AG04449 (cell line): ENCODE measurements at regions of chr6 and their contacts with region 1.

Region 1: DNA sequence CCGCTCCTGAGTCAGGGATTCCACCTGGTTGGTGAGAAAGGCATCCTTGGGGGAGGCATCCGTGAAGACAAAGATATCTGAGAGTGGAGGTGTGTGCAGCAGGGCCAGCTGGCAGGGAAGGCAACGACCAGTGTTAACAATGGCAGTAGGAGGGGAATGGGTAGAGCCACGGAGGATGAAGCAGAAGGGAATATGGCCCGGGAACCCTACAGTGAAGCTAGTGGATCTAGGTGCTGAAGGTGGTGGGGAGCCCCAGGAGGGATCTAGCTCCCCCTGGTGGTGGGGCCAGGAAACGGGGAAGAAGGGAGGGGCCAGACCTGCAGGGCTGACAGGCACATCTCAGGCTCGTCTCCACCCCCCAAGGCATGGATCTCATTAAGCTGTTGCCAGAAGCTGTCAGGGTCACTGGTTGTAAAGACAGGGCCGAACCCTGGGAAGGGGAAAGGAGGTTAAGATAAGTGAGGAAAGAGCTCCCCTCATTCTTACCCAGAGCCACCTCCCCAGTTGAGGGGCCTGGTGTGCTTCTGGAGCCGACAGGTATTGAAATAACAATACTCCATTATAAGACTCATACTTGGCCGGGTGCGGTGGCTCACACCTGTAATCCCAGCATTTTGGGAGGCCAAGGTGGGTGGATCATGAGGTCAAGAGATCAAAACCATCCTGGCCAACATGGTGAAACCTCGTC is 7.3 kb downstream of the VWA7 start:
- DNase-seq: no peak
- H3K4me3 ChIP-seq: no peak overlapping the region
- CTCF ChIP-seq: peak; percentile 78

Region 2: DNA sequence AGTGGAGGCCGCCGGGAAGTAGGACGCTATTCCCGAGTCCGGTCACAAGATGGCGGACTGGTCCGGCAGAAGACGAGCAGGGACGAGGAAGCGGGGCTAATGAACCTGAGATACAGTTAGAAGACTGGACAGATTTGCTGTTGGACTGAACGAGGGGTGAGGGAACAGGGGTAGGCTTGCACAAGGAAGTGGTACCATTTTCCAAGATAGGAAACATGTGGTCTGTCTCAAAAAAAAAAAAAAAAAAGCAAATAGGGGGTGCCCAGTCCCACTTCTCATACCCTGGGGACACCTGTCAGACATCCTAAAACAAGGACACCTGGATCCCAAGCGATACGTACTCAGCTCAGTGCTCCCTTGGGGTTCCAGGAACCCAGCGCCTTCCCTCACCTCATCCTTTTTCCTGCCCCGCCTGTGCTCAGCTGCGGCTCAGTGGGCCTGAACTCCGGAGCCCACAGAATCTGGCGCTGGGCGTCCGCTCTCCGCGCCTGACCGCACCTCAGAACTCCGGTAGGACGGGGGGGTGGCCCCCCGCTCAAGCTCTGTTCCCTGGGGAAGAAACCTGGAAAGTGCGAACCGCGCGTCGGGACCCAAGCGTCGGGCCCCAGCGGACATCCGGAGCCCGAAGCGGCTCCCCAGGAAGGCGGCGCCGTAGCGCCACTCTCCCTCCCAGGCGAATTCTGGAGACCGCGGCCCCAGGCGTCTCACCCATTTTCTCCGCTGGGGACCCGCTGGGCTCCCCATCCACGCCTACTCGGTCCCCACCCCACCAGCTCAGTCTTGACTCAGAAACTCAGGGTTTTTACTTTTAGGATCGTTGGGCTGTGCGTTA is 88.8 kb before region 1 on chr6 and contains the start of gene LY6G5C:
- CTCF ChIA-PET with region 1: interaction called, 12 read pairs
- POLR2A ChIA-PET with region 1: no interaction called
- DNase-seq: peak; percentile 64
- H3K4me3 ChIP-seq: peak within 1 kb of the TSS; percentile 58
- CTCF ChIP-seq: peak; percentile 78

Region 3: GRCh38 chr6:31702819-31703522 is 66.9 kb before region 1 on chr6 and contains the start of gene ABHD16A:
- CTCF ChIA-PET with region 1: interaction called, 11 read pairs
- POLR2A ChIA-PET with region 1: no interaction called
- DNase-seq: peak; percentile 84
- H3K4me3 ChIP-seq: peak within 1 kb of the TSS; percentile 84
- CTCF ChIP-seq: no peak

Region 4: GRCh38 chr6:31752739-31753319 is 17.0 kb before region 1 on chr6:
- CTCF ChIA-PET with region 1: interaction called, 28 read pairs
- POLR2A ChIA-PET with region 1: no interaction called
- DNase-seq: no peak
- H3K4me3 ChIP-seq: no peak overlapping the region
- CTCF ChIP-seq: no peak

Region 5: DNA sequence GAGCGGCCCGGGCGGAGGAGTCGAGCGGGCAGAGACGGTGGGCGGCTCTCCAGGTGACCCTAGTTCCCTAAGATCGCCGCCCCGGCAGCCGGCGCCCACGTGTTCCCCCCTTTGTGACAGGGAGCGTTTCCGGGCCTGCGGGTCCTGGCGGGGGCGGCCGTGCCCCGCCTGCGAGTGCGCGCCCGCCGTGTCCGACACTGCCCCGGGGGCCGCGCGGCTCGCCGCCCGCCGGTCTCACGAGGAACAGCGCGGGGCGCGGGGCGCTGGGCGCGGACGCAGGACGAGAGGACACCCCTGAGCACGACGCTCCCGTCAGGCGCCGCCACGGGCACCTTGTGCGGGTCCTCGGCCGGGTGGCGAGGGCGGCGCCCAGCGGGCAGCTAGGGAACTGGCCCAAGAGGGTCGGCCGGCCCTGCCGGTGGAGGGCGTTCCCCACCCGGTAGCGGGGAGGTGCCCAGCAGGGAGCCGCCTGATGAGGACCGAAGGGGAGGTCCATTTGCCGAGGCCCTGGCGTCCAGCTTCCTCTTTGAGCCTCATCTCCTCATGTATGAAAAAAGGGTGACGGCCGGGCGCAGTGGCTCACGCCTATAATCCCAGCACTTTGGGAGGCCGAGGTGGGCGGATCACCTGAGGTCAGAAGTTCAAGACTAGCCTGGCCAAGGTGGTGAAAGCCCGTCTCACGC is 25.9 kb after region 1 on chr6 and contains the start of gene VARS1:
- CTCF ChIA-PET with region 1: interaction called, 17 read pairs
- POLR2A ChIA-PET with region 1: interaction called, 3 read pairs
- DNase-seq: no peak
- H3K4me3 ChIP-seq: peak within 1 kb of the TSS; percentile 68
- CTCF ChIP-seq: peak; percentile 97